K562 (cell line): ENCODE measurements at regions of chr9 and their contacts with region 1.

Region 1: DNA sequence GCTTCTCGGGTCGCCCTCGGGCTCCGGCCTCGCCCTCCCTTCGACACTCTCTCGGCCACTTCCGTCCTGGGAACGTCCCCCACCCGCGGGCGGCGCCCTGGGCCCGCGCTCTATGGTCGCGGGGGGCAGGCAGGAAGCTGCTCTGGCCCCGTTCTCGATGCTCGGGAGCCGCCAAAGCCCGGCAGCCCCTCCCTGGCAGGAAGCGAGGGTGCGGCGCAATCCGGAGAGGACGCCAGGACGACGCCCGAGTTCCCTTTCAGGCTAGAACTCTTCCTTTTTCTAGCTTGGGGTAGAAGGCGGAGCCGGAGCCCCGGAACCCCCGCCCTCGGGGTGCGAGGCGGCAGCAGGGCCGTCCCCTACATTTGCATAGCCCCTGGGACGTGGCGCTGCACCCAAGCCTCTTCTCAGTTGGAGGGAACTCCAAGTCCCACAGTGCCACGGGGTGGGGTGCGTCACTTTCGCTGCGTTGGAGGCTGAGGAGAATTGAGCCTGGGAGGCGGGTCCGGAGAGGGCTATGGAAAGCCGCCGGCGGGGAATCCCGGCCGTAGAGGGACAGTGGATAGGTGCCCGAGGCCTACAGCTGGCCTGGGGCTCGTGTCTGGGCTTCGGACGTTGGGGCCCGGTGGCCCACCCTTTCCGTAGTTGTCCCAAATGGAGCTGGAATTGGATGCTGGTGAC is at the starts of genes CREB3 and TLN1:
- DNase-seq: peak; percentile 77 to 94 (median 84)
- ATAC-seq: peak; percentile 84
- H3K4me3 ChIP-seq: peak within 1 kb of the TSS; percentile 85
- H3K27ac ChIP-seq: peak within 1 kb of the TSS; percentile 97
- H3K4me1 ChIP-seq: peaks cover 30 to 36% of the 10 kb centered on the region in 2 experiments
- H3K27me3 ChIP-seq: no peaks in the 10 kb centered on the region
- CTCF ChIP-seq: peak; percentile 15 to 31 (median 15); a peak in 1 of 6 replicates
- EP300 ChIP-seq: no peak
- POLR2A ChIP-seq: peak; percentile 67; the same call in 1 of the 2 replicates
- RAD21 ChIP-seq: no peak
- polyA plus RNA-seq, gene CREB3: 5.7 to 9.4 TPM
- polyA plus RNA-seq, gene TLN1: 3.6 to 10.2 TPM

Region 2: GRCh38 chr9:35116898-35117551 is 615.2 kb before region 1 on chr9:
- CTCF ChIA-PET with region 1: no interaction called
- POLR2A ChIA-PET with region 1: no interaction called
- in situ Hi-C with region 1: no loop called
- intact Hi-C with region 1: no loop called
- DNase-seq: peak; percentile 71 to 92 (median 72)
- ATAC-seq: peak; percentile 80
- H3K4me3 ChIP-seq: peak overlapping the region; percentile 58
- H3K27ac ChIP-seq: peak overlapping the region; percentile 62; the same call in 2 of the 3 replicates
- H3K4me1 ChIP-seq: peaks cover 20 to 26% of the 10 kb centered on the region in 2 experiments
- H3K27me3 ChIP-seq: no peaks in the 10 kb centered on the region
- CTCF ChIP-seq: peak; percentile 89 to 97 (median 94)
- EP300 ChIP-seq: no peak
- POLR2A ChIP-seq: no peak
- RAD21 ChIP-seq: peak; percentile 74 to 86

Region 3: GRCh38 chr9:35385042-35385441 is 347.2 kb before region 1 on chr9:
- CTCF ChIA-PET with region 1: no interaction called
- POLR2A ChIA-PET with region 1: no interaction called
- in situ Hi-C with region 1: no loop called
- intact Hi-C with region 1: no loop called
- DNase-seq: no peak
- ATAC-seq: no peak
- H3K4me3 ChIP-seq: no peak overlapping the region
- H3K27ac ChIP-seq: no peak overlapping the region
- H3K4me1 ChIP-seq: no peaks in the 10 kb centered on the region
- H3K27me3 ChIP-seq: no peaks in the 10 kb centered on the region
- CTCF ChIP-seq: no peak
- EP300 ChIP-seq: no peak
- POLR2A ChIP-seq: no peak
- RAD21 ChIP-seq: no peak

Region 4: DNA sequence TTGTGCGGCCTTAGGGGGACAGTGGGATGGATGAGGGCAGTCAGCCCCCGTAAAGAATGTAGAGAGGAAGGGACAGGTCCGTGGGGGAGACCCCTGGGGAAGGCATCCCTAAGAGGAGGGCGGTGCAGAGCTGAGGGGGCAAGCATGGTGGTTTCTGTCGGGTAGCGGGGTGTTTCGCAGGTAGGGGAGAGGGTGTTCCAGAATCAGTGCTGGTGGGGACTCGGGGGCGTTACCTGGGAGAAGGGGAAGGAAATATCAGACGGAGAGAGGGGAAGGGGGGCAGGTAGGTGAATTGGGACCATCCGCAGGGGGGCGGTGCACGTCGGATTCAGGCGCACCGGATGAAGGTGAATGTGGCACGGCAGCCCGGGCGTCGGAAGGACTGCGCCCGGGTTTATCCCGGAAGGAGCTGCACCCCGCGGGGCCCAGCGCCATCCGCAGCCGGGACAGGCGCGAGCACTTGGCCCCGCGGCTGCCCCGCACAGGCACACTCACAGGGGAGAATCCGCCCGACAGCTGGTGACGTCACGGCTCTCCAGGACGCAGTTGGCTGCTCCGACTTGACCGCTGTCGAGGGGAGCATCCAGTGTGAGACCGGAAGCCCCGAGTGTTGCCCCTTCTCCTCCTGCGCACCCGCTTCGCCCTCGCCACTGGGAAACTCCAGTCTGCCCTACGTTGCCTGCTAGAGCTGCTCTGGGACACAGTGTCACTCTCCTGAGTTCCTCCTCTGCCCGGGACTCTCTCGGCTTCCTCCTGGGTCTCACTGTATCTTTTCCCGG is 115.4 kb before region 1 on chr9:
- CTCF ChIA-PET with region 1: no interaction called
- POLR2A ChIA-PET with region 1: no interaction called
- in situ Hi-C with region 1: no loop called
- intact Hi-C with region 1: no loop called
- DNase-seq: peak in 3 of 4 experiments; percentile 39 to 62 (median 53)
- ATAC-seq: peak; percentile 71
- H3K4me3 ChIP-seq: peak overlapping the region; percentile 15; the same call in 1 of the 2 replicates
- H3K27ac ChIP-seq: no peak overlapping the region
- H3K4me1 ChIP-seq: peaks cover 5 to 24% of the 10 kb centered on the region in 2 experiments; a peak in 3 of 5 replicates
- H3K27me3 ChIP-seq: peaks cover 3 to 27% of the 10 kb centered on the region in 2 experiments; a peak in 3 of 5 replicates
- CTCF ChIP-seq: no peak
- EP300 ChIP-seq: no peak
- POLR2A ChIP-seq: no peak
- RAD21 ChIP-seq: no peak

Region 5: DNA sequence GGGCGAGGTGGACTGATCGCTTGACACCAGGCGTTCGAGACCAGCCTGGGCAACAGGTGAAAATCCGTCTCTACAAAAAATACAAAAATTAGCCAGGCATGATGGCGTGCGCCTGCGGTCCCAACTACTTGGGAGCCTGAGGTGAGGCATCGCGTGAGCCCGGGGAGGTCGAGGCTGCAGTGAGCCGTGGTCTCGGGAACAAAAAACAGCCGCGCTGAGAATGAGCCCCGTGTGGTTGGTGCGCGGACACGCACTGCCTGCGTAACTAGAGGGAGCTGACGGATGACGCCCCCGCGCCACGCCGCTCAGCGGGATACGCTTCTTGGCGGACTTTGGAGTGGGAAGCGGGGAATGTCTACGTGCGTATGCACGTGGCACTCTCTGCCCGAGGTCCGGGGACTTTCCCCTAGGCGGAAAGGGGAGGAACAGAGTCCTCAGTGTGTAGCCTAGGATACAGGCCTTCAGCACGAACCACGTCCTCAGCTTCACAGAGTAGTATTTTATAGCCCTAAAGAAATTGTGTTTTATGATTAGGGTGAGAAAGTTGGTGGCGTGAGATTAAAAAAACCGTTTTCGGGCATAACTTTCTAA is 74.6 kb before region 1 on chr9 and contains the start of gene RMRP:
- CTCF ChIA-PET with region 1: no interaction called
- POLR2A ChIA-PET with region 1: interaction called, 13 read pairs
- in situ Hi-C with region 1: no loop called
- intact Hi-C with region 1: loop called (anchors 2 kb)
- DNase-seq: peak; percentile 80 to 98 (median 86)
- ATAC-seq: peak; percentile 96
- H3K4me3 ChIP-seq: peak within 1 kb of the TSS; percentile 89
- H3K27ac ChIP-seq: peak within 1 kb of the TSS; percentile 98
- H3K4me1 ChIP-seq: peaks cover 14 to 26% of the 10 kb centered on the region in 2 experiments; a peak in 4 of 5 replicates
- H3K27me3 ChIP-seq: no peaks in the 10 kb centered on the region
- CTCF ChIP-seq: peak; percentile 19 to 35 (median 25); a peak in 2 of 6 replicates
- EP300 ChIP-seq: peak; percentile 42; the same call in 1 of the 2 replicates
- POLR2A ChIP-seq: no peak; the same call in 1 of the 2 replicates
- RAD21 ChIP-seq: no peak; a peak in 1 of 4 replicates
- polyA plus RNA-seq, gene RMRP: not detected

Region 6: DNA sequence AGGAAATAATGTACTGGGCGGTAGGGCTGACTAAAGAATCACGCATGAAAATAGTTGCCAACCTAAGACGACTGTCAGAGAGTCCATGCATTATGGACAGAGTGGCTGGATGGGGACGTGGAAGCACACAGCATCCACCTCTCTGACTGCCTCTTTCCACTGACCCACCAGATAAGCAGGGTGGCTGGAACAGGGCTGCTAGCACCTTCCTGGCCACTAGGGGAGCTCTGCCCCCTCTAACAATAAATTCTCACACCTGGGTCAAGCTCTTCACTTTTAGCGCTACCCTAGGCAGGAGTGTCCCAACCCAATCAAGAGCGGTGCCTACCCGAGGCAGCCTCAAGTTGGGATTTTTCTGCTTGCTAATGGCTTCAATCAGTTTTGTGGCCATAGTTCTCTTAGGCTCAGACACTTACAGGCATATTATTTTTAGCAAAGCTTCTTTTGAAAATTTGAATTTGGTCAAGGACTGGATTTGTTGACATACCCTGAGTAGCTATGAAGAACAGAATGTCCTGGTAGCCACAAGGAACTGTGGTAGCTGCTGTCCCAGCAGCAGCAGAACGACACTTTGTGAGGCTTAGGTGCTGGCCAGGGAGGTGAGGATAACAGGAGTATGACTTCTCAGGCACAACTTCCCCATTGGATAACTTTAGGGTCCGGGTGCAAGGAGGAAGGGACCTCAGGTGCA is 35.6 kb before region 1 on chr9:
- CTCF ChIA-PET with region 1: no interaction called
- POLR2A ChIA-PET with region 1: interaction called, 7 read pairs
- in situ Hi-C with region 1: no loop called
- intact Hi-C with region 1: loop called (anchors 2 kb)
- DNase-seq: peak; percentile 59 to 70 (median 69)
- ATAC-seq: peak; percentile 96
- H3K4me3 ChIP-seq: no peak overlapping the region
- H3K27ac ChIP-seq: no peak overlapping the region
- H3K4me1 ChIP-seq: no peaks in the 10 kb centered on the region; a peak in 3 of 5 replicates
- H3K27me3 ChIP-seq: no peaks in the 10 kb centered on the region
- CTCF ChIP-seq: peak; percentile 75 to 85 (median 78)
- EP300 ChIP-seq: no peak
- POLR2A ChIP-seq: no peak
- RAD21 ChIP-seq: peak in 1 of 2 experiments; percentile 40; a peak in 2 of 4 replicates

Region 7: DNA sequence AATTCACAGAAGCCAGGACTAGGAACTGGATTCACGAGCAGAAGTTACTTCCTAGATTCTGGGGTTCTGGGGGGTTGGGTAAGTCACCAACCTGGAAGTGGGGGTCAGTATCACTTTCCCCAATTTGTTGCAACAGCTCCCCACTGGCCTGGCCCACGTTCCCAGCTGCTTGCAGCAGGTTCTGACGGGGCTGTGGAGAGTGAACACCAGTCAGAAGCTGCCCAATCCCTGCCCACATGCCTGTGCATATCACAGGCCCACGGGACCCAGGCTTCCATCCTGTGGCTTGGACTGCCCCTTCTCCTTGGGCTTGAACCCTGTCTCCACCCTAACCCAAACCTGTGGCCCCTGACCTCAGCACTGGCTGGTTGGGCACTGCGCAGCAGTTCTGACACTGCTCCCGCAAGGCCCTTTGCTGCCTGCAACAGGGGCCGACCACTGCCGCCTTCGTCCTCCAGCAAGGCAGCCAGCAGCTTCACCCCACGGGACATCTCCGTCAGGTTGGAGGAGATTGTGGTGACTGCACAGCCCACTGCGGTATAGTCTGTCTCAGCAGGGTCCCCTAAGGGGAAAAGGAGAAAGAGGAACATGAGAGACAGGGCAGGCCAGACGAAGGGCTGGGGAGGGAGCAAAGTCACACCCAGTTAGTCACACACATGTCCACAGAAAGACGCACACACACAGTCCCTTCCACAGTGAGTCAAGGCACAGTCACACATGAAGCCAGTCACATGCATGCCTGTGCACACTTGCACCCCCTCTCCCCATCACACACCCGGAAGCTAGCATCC is 13.3 kb before region 1 on chr9:
- CTCF ChIA-PET with region 1: no interaction called
- POLR2A ChIA-PET with region 1: interaction called, 18 read pairs
- in situ Hi-C with region 1: no loop called
- intact Hi-C with region 1: no loop called
- DNase-seq: no peak
- ATAC-seq: no peak
- H3K4me3 ChIP-seq: no peak overlapping the region
- H3K27ac ChIP-seq: no peak overlapping the region
- H3K4me1 ChIP-seq: peaks cover 0 to 2% of the 10 kb centered on the region in 2 experiments; a peak in 2 of 5 replicates
- H3K27me3 ChIP-seq: no peaks in the 10 kb centered on the region
- CTCF ChIP-seq: no peak
- EP300 ChIP-seq: no peak
- POLR2A ChIP-seq: no peak
- RAD21 ChIP-seq: no peak

Region 8: DNA sequence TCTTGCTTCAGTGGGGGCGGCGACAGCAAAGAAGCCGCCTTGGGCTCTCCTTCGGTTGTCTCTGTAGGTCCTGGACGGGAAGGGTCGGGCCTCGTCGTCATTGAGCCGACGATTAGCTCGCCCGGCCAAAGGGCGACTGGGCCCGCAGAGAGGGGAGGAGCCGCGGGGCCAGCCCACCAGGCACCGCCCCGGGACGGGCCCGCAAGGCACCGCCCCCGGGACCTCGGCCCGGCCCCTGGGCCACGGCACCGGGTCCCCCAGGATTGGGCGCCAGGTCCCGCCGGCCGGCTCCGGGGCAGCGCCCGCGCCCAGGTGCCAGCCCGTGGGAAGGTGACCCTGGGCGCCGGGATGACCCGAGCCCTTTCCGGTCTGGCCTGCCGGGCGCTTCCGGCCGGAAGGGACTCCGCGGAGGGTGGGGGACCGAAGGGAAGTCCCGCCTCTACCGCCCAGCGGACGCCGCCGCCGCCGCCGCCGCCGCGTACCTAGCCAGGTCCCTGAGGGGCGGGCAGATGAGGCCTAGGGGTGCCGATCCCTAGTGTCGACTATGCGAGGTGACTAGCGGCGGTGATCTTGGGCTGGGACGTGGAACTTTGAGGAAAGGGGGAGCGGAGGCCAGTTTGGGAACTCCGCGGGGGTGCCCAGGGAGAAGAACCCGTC is 16.7 kb after region 1 on chr9 and contains the starts of genes GBA2 and RGP1:
- CTCF ChIA-PET with region 1: no interaction called
- POLR2A ChIA-PET with region 1: interaction called, 17 read pairs
- in situ Hi-C with region 1: no loop called
- intact Hi-C with region 1: loop called (anchors 2 kb)
- DNase-seq: peak; percentile 79 to 88 (median 84)
- ATAC-seq: peak; percentile 93
- H3K4me3 ChIP-seq: peak within 1 kb of the TSS; percentile 95
- H3K27ac ChIP-seq: peak within 1 kb of the TSS; percentile 91
- H3K4me1 ChIP-seq: peaks cover 8 to 18% of the 10 kb centered on the region in 2 experiments; a peak in 4 of 5 replicates
- H3K27me3 ChIP-seq: no peaks in the 10 kb centered on the region
- CTCF ChIP-seq: no peak
- EP300 ChIP-seq: no peak
- POLR2A ChIP-seq: peak; percentile 62; the same call in 1 of the 2 replicates
- RAD21 ChIP-seq: no peak
- polyA plus RNA-seq, gene GBA2: 14.1 to 24.3 TPM
- polyA plus RNA-seq, gene RGP1: 0.42 to 0.95 TPM

Region 9: DNA sequence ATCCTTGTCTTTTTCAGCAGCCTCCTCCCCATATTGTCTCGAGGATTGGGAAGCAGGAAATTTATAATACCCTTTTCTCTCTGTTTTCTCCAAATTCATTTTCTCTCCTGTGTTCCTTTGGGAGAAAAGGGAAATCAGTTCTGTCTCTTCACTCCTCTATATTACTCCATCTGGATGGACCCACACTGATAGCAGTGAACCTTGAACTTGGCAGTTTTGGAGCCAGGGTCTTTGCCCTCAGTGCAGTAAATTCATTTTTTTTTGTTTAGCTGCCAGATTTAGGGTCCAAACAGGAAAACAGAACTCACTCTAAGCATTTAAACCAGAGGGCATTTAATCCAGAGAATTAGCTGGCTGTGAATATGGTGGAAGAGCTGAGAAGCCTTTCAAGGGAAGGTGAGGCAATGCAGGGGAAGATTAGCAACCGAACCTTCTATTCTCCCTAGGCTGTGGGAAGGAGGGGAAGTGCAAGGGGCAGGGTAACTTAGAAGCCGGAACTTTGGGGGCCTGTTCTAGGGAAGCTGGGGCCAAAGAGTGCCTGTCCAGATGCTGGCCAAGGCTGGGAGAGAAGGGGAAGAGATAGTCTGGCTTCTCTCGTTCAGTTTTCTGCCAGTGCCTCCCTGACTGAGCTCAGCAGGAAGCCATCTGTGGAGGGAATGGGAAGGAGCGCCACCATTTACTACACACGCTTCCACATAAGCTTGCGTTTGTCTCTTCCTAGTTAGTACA is 42.8 kb after region 1 on chr9:
- CTCF ChIA-PET with region 1: no interaction called
- POLR2A ChIA-PET with region 1: interaction called, 6 read pairs
- in situ Hi-C with region 1: no loop called
- intact Hi-C with region 1: loop called (anchors 5 kb)
- DNase-seq: peak in 2 of 4 experiments; percentile 13 to 29
- ATAC-seq: peak; percentile 81
- H3K4me3 ChIP-seq: no peak overlapping the region
- H3K27ac ChIP-seq: peak overlapping the region; percentile 73; the same call in 2 of the 3 replicates
- H3K4me1 ChIP-seq: peaks cover 6 to 23% of the 10 kb centered on the region in 2 experiments; a peak in 4 of 5 replicates
- H3K27me3 ChIP-seq: no peaks in the 10 kb centered on the region
- CTCF ChIP-seq: no peak
- EP300 ChIP-seq: no peak
- POLR2A ChIP-seq: no peak
- RAD21 ChIP-seq: no peak

Region 10: GRCh38 chr9:35814841-35815543 is 82.7 kb after region 1 on chr9 and contains the start of gene HINT2:
- CTCF ChIA-PET with region 1: no interaction called
- POLR2A ChIA-PET with region 1: interaction called, 3 read pairs
- in situ Hi-C with region 1: no loop called
- intact Hi-C with region 1: loop called (anchors 10 kb)
- DNase-seq: peak; percentile 89 to 96 (median 92)
- ATAC-seq: peak; percentile 92
- H3K4me3 ChIP-seq: peak within 1 kb of the TSS; percentile 66
- H3K27ac ChIP-seq: peak within 1 kb of the TSS; percentile 94
- H3K4me1 ChIP-seq: peaks cover 17 to 31% of the 10 kb centered on the region in 2 experiments
- H3K27me3 ChIP-seq: no peaks in the 10 kb centered on the region
- CTCF ChIP-seq: no peak
- EP300 ChIP-seq: no peak
- POLR2A ChIP-seq: peak; percentile 86
- RAD21 ChIP-seq: no peak
- polyA plus RNA-seq, gene HINT2: 5.6 to 6.2 TPM

Region 11: DNA sequence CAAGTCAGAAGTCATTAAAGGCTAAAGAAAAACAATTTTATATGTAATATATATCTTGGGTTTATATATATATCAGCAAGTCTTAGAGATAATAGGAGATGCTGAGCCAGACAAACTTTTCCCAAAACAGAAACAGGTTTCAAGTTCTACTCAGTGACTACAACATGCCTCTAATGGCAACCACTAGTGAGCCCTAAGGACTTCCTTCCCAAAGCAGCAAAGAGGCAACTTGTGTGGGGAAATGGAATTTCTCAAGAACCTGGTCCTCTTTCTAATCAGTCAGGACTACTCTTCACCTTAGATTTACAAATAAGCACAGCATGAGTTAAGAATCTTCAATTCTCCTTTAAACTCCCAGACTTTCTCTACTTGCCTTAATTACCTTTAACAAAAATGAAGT is 650.2 kb after region 1 on chr9:
- CTCF ChIA-PET with region 1: no interaction called
- POLR2A ChIA-PET with region 1: no interaction called
- in situ Hi-C with region 1: no loop called
- intact Hi-C with region 1: no loop called
- DNase-seq: no peak
- ATAC-seq: no peak
- H3K4me3 ChIP-seq: no peak overlapping the region
- H3K27ac ChIP-seq: no peak overlapping the region
- H3K4me1 ChIP-seq: no peaks in the 10 kb centered on the region
- H3K27me3 ChIP-seq: no peaks in the 10 kb centered on the region
- CTCF ChIP-seq: no peak
- EP300 ChIP-seq: no peak
- POLR2A ChIP-seq: no peak
- RAD21 ChIP-seq: no peak